ENCODE measurements at regions of chr1 and their contacts with region 1.

Region 1: GRCh38 chr1:86692636-86693035 is 11.7 kb upstream of the SH3GLB1 start:
- DNase-seq: no peak
- H3K4me3 ChIP-seq: no peak overlapping the region
- H3K27ac ChIP-seq: no peak overlapping the region
- H3K4me1 ChIP-seq: no peaks in the 10 kb centered on the region
- CTCF ChIP-seq: no peak

Region 2: GRCh38 chr1:86515597-86515996 is 177.0 kb before region 1 on chr1:
- CTCF ChIA-PET with region 1: no interaction called
- POLR2A ChIA-PET with region 1: no interaction called
- intact Hi-C with region 1: loop called (anchors 5 kb)
- DNase-seq: peak; percentile 39
- H3K4me3 ChIP-seq: no peak overlapping the region
- H3K27ac ChIP-seq: no peak overlapping the region
- H3K4me1 ChIP-seq: no peaks in the 10 kb centered on the region
- CTCF ChIP-seq: peak; percentile 59; the same call in 1 of the 2 replicates

Measured in OCI-LY7 (cell line).